H1 (cell line): ENCODE measurements at regions of chr11 and their contacts with region 1.

Region 1: DNA sequence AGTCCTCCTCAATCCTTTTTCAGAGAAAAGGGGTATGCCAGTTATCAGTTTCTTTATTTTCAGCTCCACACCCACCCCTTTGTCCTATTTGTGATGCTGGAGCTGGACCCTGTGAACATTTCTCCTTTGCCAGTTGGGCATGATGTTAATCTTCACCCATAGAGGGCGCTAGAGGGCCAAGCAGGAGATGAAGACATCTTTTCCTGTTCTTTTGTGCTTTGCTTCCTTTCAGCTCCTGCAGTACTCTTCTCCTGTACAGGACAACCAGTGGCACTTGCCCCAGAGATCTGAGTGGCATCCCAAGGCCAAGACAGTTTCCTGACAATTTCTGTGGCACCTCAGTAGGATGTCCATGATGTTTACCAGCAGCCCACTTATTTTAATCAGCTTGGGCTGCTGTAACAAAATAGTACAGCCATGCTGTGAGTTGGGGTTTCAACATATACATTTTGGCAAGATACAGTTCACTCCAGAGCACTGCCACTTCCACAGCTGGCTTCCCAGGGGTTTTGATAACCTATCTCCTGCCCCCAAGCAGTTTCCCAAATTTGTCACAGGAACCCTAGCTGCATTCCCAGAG is 4.6 kb downstream of the SAA2 start:
- DNase-seq: peak; percentile 19 to 72
- H3K4me3 ChIP-seq: no peak overlapping the region
- H3K27ac ChIP-seq: no peak overlapping the region
- H3K4me1 ChIP-seq: no peaks in the 10 kb centered on the region
- H3K27me3 ChIP-seq: no peaks in the 10 kb centered on the region
- CTCF ChIP-seq: peak; percentile 16 to 90 (median 69)
- EP300 ChIP-seq: no peak
- POLR2A ChIP-seq: no peak
- RAD21 ChIP-seq: peak; percentile 85 to 88

Region 2: DNA sequence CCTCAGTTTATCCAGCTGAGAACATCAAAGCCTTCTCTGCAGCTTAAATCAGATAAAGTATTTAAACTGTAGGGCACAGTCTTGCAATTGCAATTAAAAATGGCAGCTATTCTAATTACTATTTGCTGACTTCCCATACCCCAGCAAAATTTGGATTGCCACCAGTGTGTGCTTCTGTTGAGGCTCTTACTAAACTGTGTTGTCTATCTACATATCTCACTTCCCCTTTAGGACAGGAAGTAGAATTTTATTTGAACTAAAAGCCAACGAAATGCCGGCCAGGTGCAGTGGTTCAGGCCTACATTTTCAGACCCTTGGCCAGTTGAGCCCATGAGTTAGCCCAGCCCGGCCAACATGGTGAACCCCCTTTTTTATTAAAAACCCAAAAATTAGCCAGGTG is 14.4 kb before region 1 on chr11:
- CTCF ChIA-PET with region 1: interaction called, 13 read pairs
- POLR2A ChIA-PET with region 1: interaction called, 3 read pairs
- DNase-seq: no peak
- H3K4me3 ChIP-seq: no peak overlapping the region
- H3K27ac ChIP-seq: no peak overlapping the region
- H3K4me1 ChIP-seq: no peaks in the 10 kb centered on the region
- H3K27me3 ChIP-seq: no peaks in the 10 kb centered on the region
- CTCF ChIP-seq: no peak
- EP300 ChIP-seq: no peak
- POLR2A ChIP-seq: no peak
- RAD21 ChIP-seq: no peak

Region 3: DNA sequence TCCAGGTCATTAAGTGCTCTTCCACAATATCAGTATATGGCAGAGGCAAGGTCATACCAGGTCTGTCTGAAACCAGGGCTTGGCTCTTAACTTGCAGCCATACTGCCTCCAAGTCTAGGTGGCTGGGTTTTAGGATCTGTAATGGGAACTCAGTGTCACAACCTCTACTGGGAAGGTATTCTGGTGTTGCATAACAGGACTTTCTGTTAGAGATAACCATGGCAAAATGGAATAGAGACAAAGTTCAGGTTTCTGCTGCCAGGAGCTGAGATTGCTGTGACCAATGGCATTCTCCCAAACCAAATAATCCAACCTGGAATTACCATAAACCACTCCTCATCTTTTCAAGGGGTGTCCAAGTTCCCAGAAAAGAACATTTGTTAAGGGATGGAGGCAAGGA is 15.4 kb after region 1 on chr11:
- CTCF ChIA-PET with region 1: interaction called, 15 read pairs
- POLR2A ChIA-PET with region 1: no interaction called
- DNase-seq: no peak
- H3K4me3 ChIP-seq: no peak overlapping the region
- H3K27ac ChIP-seq: no peak overlapping the region
- H3K4me1 ChIP-seq: no peaks in the 10 kb centered on the region
- H3K27me3 ChIP-seq: no peaks in the 10 kb centered on the region
- CTCF ChIP-seq: no peak
- EP300 ChIP-seq: no peak
- POLR2A ChIP-seq: no peak
- RAD21 ChIP-seq: no peak